ENCODE measurements at regions of chr2 and their contacts with region 1.

Region 1: DNA sequence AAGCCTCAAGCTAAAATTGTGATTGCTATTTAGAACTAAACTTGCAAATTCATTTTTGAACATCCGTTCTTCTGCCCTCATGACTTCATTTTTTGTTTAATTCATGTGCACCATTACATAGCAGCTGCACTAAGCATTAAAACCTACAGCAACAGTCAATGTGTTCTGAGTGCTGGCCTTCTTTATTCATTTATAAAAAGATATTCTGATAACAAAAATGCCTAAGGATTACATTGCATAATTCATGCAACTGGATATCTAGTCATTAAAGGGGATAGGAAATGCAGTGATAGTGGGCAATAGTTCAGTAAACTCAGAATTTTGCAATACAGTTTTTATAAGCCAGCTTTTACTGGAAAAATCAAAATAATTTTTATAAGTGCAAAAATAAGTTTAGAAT is 294.4 kb upstream of the EPC2 start:
- DNase-seq: no peak
- ATAC-seq: no peak
- H3K4me3 ChIP-seq: no peak overlapping the region
- H3K27ac ChIP-seq: no peak overlapping the region
- H3K4me1 ChIP-seq: no peaks in the 10 kb centered on the region
- H3K27me3 ChIP-seq: no peaks in the 10 kb centered on the region
- CTCF ChIP-seq: no peak
- POLR2A ChIP-seq: no peak
- RAD21 ChIP-seq: no peak

Region 2: GRCh38 chr2:147989809-147990403 is 360.3 kb before region 1 on chr2:
- CTCF ChIA-PET with region 1: no interaction called
- POLR2A ChIA-PET with region 1: no interaction called
- dilution Hi-C with region 1: no loop called
- in situ Hi-C with region 1: no loop called
- intact Hi-C with region 1: loop called (anchors 10 kb)
- DNase-seq: peak; percentile 72
- ATAC-seq: peak; percentile 95
- H3K4me3 ChIP-seq: no peak overlapping the region
- H3K27ac ChIP-seq: no peak overlapping the region
- H3K4me1 ChIP-seq: no peaks in the 10 kb centered on the region; the same call in none of the 2 replicates
- H3K27me3 ChIP-seq: no peaks in the 10 kb centered on the region
- CTCF ChIP-seq: peak; percentile 99
- POLR2A ChIP-seq: no peak
- RAD21 ChIP-seq: peak; percentile 96

Region 3: GRCh38 chr2:148338541-148338940 is 11.7 kb before region 1 on chr2:
- CTCF ChIA-PET with region 1: no interaction called
- POLR2A ChIA-PET with region 1: no interaction called
- dilution Hi-C with region 1: no loop called
- in situ Hi-C with region 1: no loop called
- intact Hi-C with region 1: loop called (anchors 1 kb)
- DNase-seq: peak; percentile 87
- ATAC-seq: peak; percentile 99
- H3K4me3 ChIP-seq: no peak overlapping the region
- H3K27ac ChIP-seq: peak overlapping the region; percentile 63; the same call in 1 of the 2 replicates
- H3K4me1 ChIP-seq: peaks cover 3% of the 10 kb centered on the region
- H3K27me3 ChIP-seq: no peaks in the 10 kb centered on the region
- CTCF ChIP-seq: no peak
- POLR2A ChIP-seq: no peak
- RAD21 ChIP-seq: no peak

Region 4: DNA sequence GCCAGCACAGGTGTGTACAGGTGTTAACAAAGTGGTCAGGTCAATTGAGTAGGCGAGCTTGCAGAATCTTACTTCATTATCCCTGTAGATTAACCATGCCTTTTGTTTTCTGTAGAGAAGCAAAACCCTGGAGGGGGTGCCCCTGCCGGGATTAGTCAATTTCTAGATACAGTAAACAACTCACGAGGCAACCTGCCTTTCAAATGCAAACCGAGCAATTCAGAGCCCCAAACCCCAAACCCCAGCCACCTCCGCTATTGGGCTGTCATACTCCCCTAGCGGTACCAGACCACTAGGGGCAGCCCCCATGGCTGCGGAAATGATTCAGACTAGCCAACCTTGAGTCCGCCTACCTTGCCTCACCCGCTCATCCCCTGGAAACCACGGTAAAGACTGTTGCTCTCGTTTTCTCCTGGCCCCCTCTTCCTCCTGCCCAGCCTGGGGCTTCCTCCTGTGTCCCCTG is 463.4 kb after region 1 on chr2:
- CTCF ChIA-PET with region 1: no interaction called
- POLR2A ChIA-PET with region 1: no interaction called
- dilution Hi-C with region 1: no loop called
- in situ Hi-C with region 1: no loop called
- intact Hi-C with region 1: no loop called
- DNase-seq: no peak
- ATAC-seq: no peak
- H3K4me3 ChIP-seq: no peak overlapping the region
- H3K27ac ChIP-seq: no peak overlapping the region
- H3K4me1 ChIP-seq: peaks cover 14% of the 10 kb centered on the region
- H3K27me3 ChIP-seq: peaks cover 13% of the 10 kb centered on the region
- CTCF ChIP-seq: no peak
- POLR2A ChIP-seq: no peak
- RAD21 ChIP-seq: no peak